HepG2 (cell line): ENCODE measurements at regions of chr17 and their contacts with region 1.

Region 1: GRCh38 chr17:39450847-39451581 is at the start of gene MED1:
- DNase-seq: peak; percentile 99
- ATAC-seq: peak; percentile 79
- H3K4me3 ChIP-seq: peak within 1 kb of the TSS; percentile 92 to 98 (median 92)
- H3K27ac ChIP-seq: peak within 1 kb of the TSS; percentile 94
- H3K4me1 ChIP-seq: peaks cover 65% of the 10 kb centered on the region
- H3K27me3 ChIP-seq: no peaks in the 10 kb centered on the region; a peak in 1 of 5 replicates
- CTCF ChIP-seq: no peak
- EP300 ChIP-seq: 0 out of 4 replicates have a peak, but pooled peaks of 1 of the 2 experiments have one; percentile 36
- POLR2A ChIP-seq: peak; percentile 81 to 94
- RAD21 ChIP-seq: no peak
- total RNA-seq, gene MED1: 37.5 and 60.9 TPM in 2 replicates

Region 2: GRCh38 chr17:39401412-39402243 is 49.4 kb before region 1 on chr17 and contains the start of gene FBXL20:
- CTCF ChIA-PET with region 1: no interaction called
- POLR2A ChIA-PET with region 1: interaction called, 23 read pairs
- in situ Hi-C with region 1: no loop called
- intact Hi-C with region 1: no loop called
- DNase-seq: peak; percentile 89
- ATAC-seq: peak; percentile 85
- H3K4me3 ChIP-seq: peak within 1 kb of the TSS; percentile 96 to 99 (median 97)
- H3K27ac ChIP-seq: peak within 1 kb of the TSS; percentile 87
- H3K4me1 ChIP-seq: peaks cover 20% of the 10 kb centered on the region
- H3K27me3 ChIP-seq: no peaks in the 10 kb centered on the region; a peak in 1 of 5 replicates
- CTCF ChIP-seq: no peak
- EP300 ChIP-seq: no peak
- POLR2A ChIP-seq: peak; percentile 88 to 93
- RAD21 ChIP-seq: peak; percentile 36
- total RNA-seq, gene FBXL20: 10.2 and 10.6 TPM in 2 replicates